ENCODE measurements at regions of chr9 and their contacts with region 1.

Region 1: DNA sequence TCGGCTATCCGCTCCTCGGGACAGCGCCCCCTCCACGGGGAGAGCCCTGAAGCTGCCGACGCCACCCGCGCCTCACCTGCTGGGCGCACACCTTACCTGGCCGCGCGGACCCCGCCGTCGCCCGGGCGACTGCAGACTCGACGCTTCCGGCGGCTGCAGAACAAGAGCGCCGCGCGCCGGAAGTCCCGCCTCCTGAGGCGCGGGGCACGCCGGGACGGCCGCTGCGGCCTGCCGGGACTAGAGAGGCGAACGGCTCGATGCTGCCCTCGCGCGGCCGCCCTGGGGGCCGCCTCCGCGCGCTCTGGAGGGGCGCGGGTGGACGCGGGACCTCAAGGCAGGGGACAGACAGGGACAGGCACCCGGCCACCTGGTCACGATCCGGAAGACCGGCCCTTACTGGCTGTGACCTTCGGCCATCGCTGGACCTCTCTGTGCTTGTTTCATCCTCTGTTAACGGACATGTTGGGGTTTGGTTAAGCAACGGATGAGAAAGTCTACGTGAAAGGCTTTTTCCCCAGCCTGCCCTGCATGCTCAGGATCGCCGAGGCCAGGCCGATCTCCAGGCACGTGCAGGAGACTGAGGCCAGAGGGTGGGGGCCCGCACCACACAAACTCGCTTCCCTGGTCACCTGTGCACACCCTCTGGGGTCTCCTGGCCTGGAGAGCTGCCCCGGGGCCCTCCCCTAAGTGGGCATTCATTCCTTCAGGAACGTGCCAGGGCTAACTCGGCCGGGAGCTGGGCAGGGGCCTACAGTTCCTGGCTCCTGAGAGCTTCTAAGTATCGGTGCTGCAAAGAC is at the start of gene SNAPC4:
- DNase-seq: peak; percentile 85
- H3K4me3 Mint-ChIP-seq: peak within 1 kb of the TSS; percentile 78
- H3K27ac Mint-ChIP-seq: peak within 1 kb of the TSS; percentile 59
- H3K4me1 Mint-ChIP-seq: peaks cover 57% of the 10 kb centered on the region
- H3K27me3 Mint-ChIP-seq: no peaks in the 10 kb centered on the region
- total RNA-seq, gene SNAPC4: 12.3 to 14.1 TPM

Region 2: GRCh38 chr9:135907431-135908092 is 492.7 kb before region 1 on chr9 and contains the start of gene CAMSAP1:
- CTCF ChIA-PET with region 1: no interaction called
- intact Hi-C with region 1: loop called (anchors 5 kb)
- DNase-seq: peak; percentile 94
- H3K4me3 Mint-ChIP-seq: peak within 1 kb of the TSS; percentile 80
- H3K27ac Mint-ChIP-seq: peak within 1 kb of the TSS; percentile 89
- H3K4me1 Mint-ChIP-seq: peaks cover 53% of the 10 kb centered on the region
- H3K27me3 Mint-ChIP-seq: no peaks in the 10 kb centered on the region
- total RNA-seq, gene CAMSAP1: 32.6 to 35.2 TPM

Region 3: DNA sequence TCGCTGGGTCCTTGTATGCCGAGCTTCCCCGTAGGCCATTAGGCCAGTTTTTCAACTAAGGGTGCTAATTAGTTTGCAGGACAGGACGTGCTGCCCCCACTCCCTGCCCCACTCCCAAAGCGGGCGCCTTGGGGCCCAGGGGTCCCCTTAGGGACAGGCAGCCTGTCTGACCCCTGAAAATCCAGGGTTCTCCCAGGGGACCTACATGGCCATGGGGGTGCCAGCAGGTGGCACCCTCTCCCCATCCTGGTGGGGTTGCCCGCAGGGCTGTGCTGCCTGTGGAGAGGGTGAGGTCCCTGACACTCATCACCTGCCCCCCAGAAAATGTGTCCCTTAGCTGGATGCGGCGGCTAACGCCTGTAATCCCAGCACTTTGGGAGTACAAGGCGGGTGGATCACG is 87.8 kb before region 1 on chr9:
- CTCF ChIA-PET with region 1: interaction called, 3 read pairs
- intact Hi-C with region 1: loop called (anchors 1 kb)
- DNase-seq: peak; percentile 55
- H3K4me3 Mint-ChIP-seq: no peak overlapping the region
- H3K27ac Mint-ChIP-seq: no peak overlapping the region
- H3K4me1 Mint-ChIP-seq: no peaks in the 10 kb centered on the region
- H3K27me3 Mint-ChIP-seq: no peaks in the 10 kb centered on the region

Region 4: GRCh38 chr9:136410500-136411287 is 10.5 kb after region 1 on chr9 and contains the starts of genes ENTR1 and PMPCA:
- CTCF ChIA-PET with region 1: interaction called, 8 read pairs
- intact Hi-C with region 1: loop called (anchors 1 kb)
- DNase-seq: peak; percentile 98
- H3K4me3 Mint-ChIP-seq: peak within 1 kb of the TSS; percentile 90
- H3K27ac Mint-ChIP-seq: peak within 1 kb of the TSS; percentile 95
- H3K4me1 Mint-ChIP-seq: peaks cover 56% of the 10 kb centered on the region
- H3K27me3 Mint-ChIP-seq: no peaks in the 10 kb centered on the region
- total RNA-seq, gene ENTR1: 85.7 to 91.6 TPM
- total RNA-seq, gene PMPCA: 69.2 to 73.7 TPM

Region 5: DNA sequence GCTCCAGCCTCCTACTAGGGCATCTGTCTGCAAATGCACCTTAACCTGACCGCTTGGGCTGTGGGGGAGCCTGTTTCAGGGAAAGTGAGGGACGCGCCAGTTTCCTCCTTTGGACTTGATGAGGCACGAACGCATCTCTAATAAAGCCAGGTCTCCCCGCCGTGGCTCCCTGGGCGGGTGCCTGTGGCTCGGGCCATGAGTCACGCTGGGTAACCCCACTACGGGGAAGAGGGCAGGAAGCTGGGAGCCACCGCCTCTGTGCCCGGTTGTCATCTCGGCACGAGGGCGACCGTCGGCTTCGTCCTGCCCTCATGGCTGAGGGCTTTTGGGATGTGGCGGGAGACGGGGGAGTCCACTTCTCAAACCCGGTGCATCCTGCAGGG is 133.5 kb after region 1 on chr9:
- CTCF ChIA-PET with region 1: no interaction called
- intact Hi-C with region 1: loop called (anchors 1 kb)
- DNase-seq: peak; percentile 94
- H3K4me3 Mint-ChIP-seq: peak overlapping the region; percentile 57
- H3K27ac Mint-ChIP-seq: peak overlapping the region; percentile 91
- H3K4me1 Mint-ChIP-seq: peaks cover 73% of the 10 kb centered on the region
- H3K27me3 Mint-ChIP-seq: no peaks in the 10 kb centered on the region

Region 6: DNA sequence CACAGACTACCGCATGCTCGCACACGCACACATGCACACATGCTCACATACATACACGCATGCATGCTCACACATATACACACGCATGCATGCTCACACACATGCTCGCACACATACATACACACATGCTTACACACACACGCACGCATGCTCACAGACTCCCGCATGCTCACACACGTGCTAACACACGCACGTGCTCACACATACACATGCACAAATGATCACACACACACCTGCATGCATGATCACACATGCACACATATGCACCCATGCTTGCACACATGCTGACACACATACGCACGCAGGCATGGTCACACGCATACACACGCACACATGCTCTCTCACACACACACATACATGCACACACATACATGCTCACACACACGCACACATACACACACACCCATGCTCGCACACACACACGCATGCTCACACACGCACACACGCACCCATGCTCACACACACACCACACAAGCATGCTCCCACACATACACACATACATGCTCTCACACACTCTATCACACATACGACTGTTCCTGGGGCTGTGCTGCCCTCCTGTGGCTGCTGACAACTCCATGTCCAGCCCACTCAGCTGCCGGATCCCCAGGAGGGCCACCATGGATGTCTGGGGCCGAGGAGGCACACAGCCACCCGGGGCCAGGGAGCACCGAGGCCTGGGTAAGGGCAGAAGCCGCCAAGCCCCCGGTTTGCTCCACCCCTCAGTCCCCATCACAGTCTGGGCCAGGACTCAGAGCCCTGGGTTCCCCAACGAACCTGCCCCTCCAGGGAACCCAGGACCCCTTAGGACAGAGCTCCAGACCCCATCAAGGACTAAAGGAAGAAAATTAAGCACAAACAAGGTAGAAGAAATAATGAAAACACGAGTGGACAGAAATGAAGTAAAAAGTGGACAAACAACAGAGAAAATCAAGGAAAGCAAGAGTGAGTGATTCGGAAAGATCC is 231.1 kb after region 1 on chr9:
- CTCF ChIA-PET with region 1: no interaction called
- intact Hi-C with region 1: loop called (anchors 1 kb)
- DNase-seq: peak; percentile 82
- H3K4me3 Mint-ChIP-seq: no peak overlapping the region
- H3K27ac Mint-ChIP-seq: no peak overlapping the region
- H3K4me1 Mint-ChIP-seq: no peaks in the 10 kb centered on the region
- H3K27me3 Mint-ChIP-seq: peaks cover 5% of the 10 kb centered on the region

Measured in activated naive CD4-positive, alpha-beta T cell treated with anti-CD3 and anti-CD28 coated beads for 36 hours (primary cell).